ENCODE measurements at regions of chr3 and their contacts with region 1.

Region 1: GRCh38 chr3:187745201-187746058 is at the start of gene BCL6:
- DNase-seq: peak; percentile 97
- H3K4me3 ChIP-seq: peak within 1 kb of the TSS; percentile 87
- CTCF ChIP-seq: no peak

Region 2: GRCh38 chr3:187679638-187680396 is 65.6 kb before region 1 on chr3:
- in situ Hi-C with region 1: no loop called
- DNase-seq: no peak
- H3K4me3 ChIP-seq: no peak overlapping the region
- CTCF ChIP-seq: peak; percentile 98

Region 3: DNA sequence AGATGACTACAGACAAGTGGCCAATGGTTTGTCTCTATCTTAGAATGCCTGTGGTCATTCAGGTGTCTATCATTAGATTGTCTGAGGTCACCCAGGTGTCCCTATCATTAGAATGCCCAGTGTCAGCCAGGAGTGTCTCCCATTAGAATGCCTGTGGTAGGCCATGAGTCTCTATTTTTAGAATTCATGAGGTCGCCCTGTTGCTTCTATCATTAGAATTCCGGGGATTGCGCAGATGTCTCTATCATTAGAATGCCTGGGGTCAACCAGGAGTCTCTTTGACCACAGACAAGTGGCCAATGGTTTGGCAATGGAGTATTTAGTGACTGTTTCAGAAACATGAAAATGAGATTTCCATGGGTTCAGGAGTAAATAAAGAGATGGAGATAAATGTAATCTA is 50.6 kb before region 1 on chr3:
- in situ Hi-C with region 1: no loop called
- DNase-seq: no peak
- H3K4me3 ChIP-seq: no peak overlapping the region
- CTCF ChIP-seq: no peak

Region 4: GRCh38 chr3:187788984-187789857 is 43.8 kb after region 1 on chr3:
- in situ Hi-C with region 1: no loop called
- DNase-seq: no peak
- H3K4me3 ChIP-seq: no peak overlapping the region
- CTCF ChIP-seq: no peak

Region 5: DNA sequence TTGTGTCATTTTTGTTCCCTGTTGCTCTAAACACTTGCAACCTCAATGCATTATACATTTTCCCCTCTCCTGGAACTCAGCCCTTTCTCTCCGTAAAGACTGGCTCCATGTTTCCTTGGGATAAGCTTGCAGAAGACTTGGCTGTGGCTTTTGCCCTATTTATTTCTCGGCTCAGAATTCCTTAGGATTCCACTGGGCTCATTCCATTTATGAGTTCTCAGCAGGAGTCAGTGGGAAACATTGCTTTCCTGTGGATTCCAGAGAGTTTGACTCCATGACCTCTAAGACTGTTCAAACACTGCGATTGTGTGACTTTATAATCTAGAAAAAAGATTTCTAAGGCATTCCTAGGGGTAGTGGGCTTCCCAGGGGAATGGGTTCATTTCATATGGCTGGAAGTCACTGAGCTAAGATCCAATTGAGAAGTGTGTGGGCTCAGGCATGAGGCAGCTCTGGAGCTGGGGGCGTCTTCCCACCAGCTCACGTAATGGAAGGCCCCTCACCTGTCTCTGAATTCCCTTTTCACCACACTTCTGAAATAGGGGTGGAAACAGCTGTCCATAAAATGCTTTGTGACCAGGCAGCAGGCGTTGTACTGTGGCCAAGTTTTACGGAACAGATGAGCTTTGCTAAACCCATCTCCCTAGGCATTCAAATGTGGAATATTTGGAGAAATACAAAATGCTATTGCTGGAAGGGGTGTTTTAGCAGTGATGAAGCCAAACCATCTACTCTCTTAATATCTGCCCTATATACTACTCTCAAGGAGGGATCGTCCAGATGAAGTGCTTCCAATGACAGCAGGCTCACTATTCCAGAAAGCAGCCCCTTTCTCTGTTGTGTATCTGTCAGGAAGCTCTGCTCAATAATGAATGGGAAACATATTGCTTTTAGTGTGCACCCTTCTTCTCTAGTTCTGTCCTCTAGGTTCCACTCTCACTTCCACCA is 91.7 kb after region 1 on chr3:
- in situ Hi-C with region 1: no loop called
- DNase-seq: peak; percentile 38
- H3K4me3 ChIP-seq: no peak overlapping the region
- CTCF ChIP-seq: no peak

Region 6: DNA sequence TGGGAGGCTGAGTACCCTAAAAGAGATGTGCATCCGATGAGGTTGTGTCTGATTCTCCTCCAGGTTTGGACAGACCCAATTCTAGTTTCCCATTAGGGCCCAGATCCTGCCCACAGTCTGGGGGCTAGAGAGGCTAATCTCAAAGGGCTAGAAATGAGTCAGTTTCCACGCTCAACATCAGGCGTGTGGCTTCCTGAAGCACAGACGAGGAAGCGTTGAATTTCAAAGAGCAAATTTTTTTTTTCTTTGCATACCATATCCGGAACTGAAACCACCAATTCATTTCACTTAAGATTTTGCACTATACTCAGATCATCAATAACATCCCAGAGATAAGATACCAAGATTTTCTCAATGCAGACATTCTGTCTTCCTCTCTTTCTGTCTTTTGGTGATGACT is 173.6 kb after region 1 on chr3:
- in situ Hi-C with region 1: loop called (anchors 10 kb)
- DNase-seq: no peak
- H3K4me3 ChIP-seq: no peak overlapping the region
- CTCF ChIP-seq: no peak

Region 7: DNA sequence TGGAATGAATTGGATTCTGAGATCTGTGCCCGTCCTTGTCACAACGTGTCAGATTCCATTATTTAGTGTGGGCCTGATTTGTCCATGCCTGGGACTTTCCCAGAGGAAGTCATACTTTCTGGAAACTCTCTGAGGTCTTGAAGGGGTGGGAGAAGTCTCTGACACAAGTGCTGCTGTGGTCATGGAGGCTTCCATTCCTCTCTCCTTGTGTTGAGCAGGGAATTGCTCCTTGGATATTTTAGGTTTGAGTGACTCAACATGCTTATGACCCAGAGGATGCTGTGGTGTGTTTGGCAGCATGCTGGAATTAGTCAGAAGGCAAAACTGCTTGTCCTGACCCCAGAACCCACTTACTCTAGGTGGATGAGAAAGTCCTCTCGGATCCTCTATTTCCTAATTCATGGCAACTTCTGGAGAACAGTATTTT is 540.7 kb after region 1 on chr3:
- in situ Hi-C with region 1: loop called (anchors 5 kb)
- DNase-seq: peak; percentile 98
- H3K4me3 ChIP-seq: no peak overlapping the region
- CTCF ChIP-seq: no peak

Region 8: GRCh38 chr3:188646592-188646991 is 901.2 kb after region 1 on chr3:
- in situ Hi-C with region 1: loop called (anchors 25 kb)
- DNase-seq: no peak
- H3K4me3 ChIP-seq: no peak overlapping the region
- CTCF ChIP-seq: no peak

Measured in astrocyte of the cerebellum (primary cell).